ENCODE measurements at regions of chr14 and their contacts with region 1.

Region 1: GRCh38 chr14:92680781-92681650 is 67.4 kb downstream of the LGMN start:
- DNase-seq: no peak
- H3K4me3 ChIP-seq: no peak overlapping the region
- H3K27me3 ChIP-seq: no peaks in the 10 kb centered on the region
- CTCF ChIP-seq: peak; percentile 93

Region 2: DNA sequence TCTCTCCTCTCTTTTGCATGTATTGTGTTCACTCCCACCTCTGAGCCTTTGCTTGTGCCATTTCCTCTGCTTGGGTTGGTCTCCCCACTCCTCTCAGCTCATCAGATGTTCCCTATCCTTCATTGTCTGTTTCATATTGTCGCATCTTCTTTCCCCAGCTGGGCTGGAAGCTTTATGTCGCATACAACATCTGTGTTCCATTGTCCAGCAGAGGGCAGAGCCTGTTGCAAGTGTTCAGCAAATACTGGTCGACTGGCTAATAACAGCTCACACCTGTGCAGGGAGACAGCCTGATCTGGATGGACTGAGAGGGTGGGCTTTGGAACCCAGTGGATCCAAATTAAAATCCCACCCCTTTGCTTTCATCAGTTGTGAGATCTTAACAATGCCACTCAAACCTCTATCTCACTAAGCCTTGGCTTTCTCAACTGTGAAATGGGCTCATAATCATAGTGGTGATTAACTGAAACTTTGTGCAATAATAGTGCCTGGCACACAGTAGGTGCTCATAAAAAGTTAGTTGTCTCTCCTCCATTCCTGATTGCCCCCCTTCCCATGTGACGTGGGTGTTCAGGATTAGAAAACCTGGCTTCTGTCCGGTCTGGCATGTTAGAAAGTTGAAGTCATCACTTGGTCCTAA is 91.7 kb before region 1 on chr14:
- CTCF ChIA-PET with region 1: interaction called, 12 read pairs
- POLR2A ChIA-PET with region 1: no interaction called
- DNase-seq: no peak
- H3K4me3 ChIP-seq: no peak overlapping the region
- H3K27me3 ChIP-seq: no peaks in the 10 kb centered on the region
- CTCF ChIP-seq: peak; percentile 52

Region 3: GRCh38 chr14:92670160-92670559 is 10.9 kb before region 1 on chr14:
- CTCF ChIA-PET with region 1: interaction called, 21 read pairs
- POLR2A ChIA-PET with region 1: no interaction called
- DNase-seq: peak; percentile 75
- H3K4me3 ChIP-seq: no peak overlapping the region
- H3K27me3 ChIP-seq: no peaks in the 10 kb centered on the region
- CTCF ChIP-seq: peak; percentile 53